Activated CD4-positive, alpha-beta memory T cell treated with anti-CD3 and anti-CD28 coated beads, Interleukin-2, amount 10 ng/mL, durations not matched to agents 7 days and 5 days (primary cell): ENCODE measurements at regions of chr2 and their contacts with region 1.

Region 1: DNA sequence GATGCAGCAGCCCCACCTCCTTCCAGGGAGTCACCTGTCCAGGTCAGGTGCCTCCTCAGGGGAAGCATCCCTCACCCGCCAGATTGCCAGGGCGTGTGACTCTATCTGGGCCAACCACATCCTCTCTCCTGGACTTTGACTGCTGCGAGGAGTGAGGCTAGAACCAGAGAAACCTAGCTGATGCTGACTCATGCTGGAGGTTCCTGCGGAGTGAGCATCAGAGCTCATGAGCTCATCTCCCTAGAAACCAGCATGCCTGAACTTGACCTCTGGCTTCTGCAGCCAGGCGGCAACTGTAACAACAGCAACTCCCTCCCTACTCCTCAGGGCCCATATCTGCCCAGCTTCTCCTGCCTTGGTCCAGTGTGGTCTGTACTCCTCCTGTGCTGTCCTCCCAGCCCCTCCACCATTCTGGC is 28.3 kb upstream of the NT5DC4 start:
- DNase-seq: peak; percentile 86
- H3K4me3 Mint-ChIP-seq: peak overlapping the region; percentile 17
- H3K27ac Mint-ChIP-seq: peak overlapping the region; percentile 90
- H3K4me1 Mint-ChIP-seq: peaks cover 36% of the 10 kb centered on the region
- H3K27me3 Mint-ChIP-seq: no peaks in the 10 kb centered on the region

Region 2: GRCh38 chr2:112597537-112598322 is 94.8 kb before region 1 on chr2:
- CTCF ChIA-PET with region 1: interaction called, 30 read pairs
- POLR2A ChIA-PET with region 1: interaction called, 9 read pairs
- DNase-seq: no peak
- H3K4me3 Mint-ChIP-seq: no peak overlapping the region
- H3K27ac Mint-ChIP-seq: no peak overlapping the region
- H3K4me1 Mint-ChIP-seq: peaks cover 7% of the 10 kb centered on the region
- H3K27me3 Mint-ChIP-seq: no peaks in the 10 kb centered on the region

Region 3: GRCh38 chr2:112607680-112608438 is 84.6 kb before region 1 on chr2:
- CTCF ChIA-PET with region 1: no interaction called
- POLR2A ChIA-PET with region 1: no interaction called
- DNase-seq: no peak
- H3K4me3 Mint-ChIP-seq: no peak overlapping the region
- H3K27ac Mint-ChIP-seq: no peak overlapping the region
- H3K4me1 Mint-ChIP-seq: peaks cover 7% of the 10 kb centered on the region
- H3K27me3 Mint-ChIP-seq: peaks cover 28% of the 10 kb centered on the region

Region 4: DNA sequence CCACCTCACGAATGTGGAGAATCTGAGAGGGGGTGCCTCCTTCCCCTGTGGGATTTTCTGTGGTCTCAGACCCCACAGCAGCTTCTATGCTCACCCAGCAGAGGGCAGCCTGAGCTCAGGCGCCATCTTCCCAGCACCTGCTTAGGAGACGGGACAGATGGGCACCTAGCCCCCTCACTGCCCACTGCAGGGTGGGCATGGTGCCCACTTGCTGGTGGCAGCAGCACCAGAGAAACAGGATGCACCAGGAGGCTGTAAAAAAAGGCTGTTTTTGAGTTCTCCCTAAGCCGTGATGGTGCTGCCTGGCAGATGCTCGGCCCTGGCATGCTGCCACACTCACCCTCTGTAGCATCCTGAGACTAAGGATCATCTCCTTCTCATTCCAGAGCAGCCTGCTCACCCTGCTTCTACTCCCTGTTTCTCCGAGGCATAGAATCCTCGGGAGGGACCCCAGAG is 65.9 kb before region 1 on chr2:
- CTCF ChIA-PET with region 1: interaction called, 172 read pairs
- POLR2A ChIA-PET with region 1: interaction called, 47 read pairs
- DNase-seq: peak; percentile 75
- H3K4me3 Mint-ChIP-seq: peak overlapping the region; percentile 49
- H3K27ac Mint-ChIP-seq: peak overlapping the region; percentile 93
- H3K4me1 Mint-ChIP-seq: peaks cover 86% of the 10 kb centered on the region
- H3K27me3 Mint-ChIP-seq: no peaks in the 10 kb centered on the region

Region 5: GRCh38 chr2:112679484-112679883 is 13.0 kb before region 1 on chr2:
- CTCF ChIA-PET with region 1: interaction called, 12 read pairs
- POLR2A ChIA-PET with region 1: interaction called, 7 read pairs
- DNase-seq: no peak
- H3K4me3 Mint-ChIP-seq: no peak overlapping the region
- H3K27ac Mint-ChIP-seq: no peak overlapping the region
- H3K4me1 Mint-ChIP-seq: peaks cover 16% of the 10 kb centered on the region
- H3K27me3 Mint-ChIP-seq: no peaks in the 10 kb centered on the region

Region 6: DNA sequence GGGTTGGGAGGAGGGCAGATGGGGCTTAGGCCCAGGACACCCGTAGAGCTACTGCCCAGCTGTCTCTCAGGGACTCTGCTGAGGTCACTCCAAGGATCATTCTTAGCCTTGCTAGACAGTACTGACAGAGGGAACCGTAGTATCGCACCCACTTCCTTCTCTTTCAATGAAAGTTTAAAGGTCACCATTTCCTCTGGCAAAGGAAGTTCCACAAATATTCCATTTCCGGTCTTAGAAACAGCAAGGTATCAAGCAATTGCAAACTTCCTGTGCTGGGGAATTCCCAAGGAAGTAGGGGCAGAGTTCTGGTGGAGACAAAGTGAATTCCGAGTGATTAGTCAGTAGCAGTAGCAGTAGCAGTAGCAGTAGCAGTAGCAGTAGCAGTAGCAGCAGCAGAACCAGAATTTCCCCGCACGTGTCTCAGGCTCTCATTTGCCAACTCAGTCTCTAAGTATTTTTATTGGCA is 119.4 kb after region 1 on chr2:
- CTCF ChIA-PET with region 1: no interaction called
- POLR2A ChIA-PET with region 1: no interaction called
- DNase-seq: no peak
- H3K4me3 Mint-ChIP-seq: no peak overlapping the region
- H3K27ac Mint-ChIP-seq: peak overlapping the region; percentile 27
- H3K4me1 Mint-ChIP-seq: peaks cover 24% of the 10 kb centered on the region
- H3K27me3 Mint-ChIP-seq: no peaks in the 10 kb centered on the region